ENCODE measurements at regions of chr3 and their contacts with region 1.

Region 1: GRCh38 chr3:129087138-129087702 is 26.6 kb downstream of the GP9 start:
- DNase-seq: peak in 1 of 2 donors; percentile 86
- H3K4me3 ChIP-seq: no peak overlapping the region
- H3K27ac ChIP-seq: peak overlapping the region; percentile 92 to 93
- H3K4me1 ChIP-seq: peaks cover 5 to 9% of the 10 kb centered on the region in 2 donors
- H3K27me3 ChIP-seq: no peaks in the 10 kb centered on the region
- CTCF ChIP-seq: no peak

Region 2: DNA sequence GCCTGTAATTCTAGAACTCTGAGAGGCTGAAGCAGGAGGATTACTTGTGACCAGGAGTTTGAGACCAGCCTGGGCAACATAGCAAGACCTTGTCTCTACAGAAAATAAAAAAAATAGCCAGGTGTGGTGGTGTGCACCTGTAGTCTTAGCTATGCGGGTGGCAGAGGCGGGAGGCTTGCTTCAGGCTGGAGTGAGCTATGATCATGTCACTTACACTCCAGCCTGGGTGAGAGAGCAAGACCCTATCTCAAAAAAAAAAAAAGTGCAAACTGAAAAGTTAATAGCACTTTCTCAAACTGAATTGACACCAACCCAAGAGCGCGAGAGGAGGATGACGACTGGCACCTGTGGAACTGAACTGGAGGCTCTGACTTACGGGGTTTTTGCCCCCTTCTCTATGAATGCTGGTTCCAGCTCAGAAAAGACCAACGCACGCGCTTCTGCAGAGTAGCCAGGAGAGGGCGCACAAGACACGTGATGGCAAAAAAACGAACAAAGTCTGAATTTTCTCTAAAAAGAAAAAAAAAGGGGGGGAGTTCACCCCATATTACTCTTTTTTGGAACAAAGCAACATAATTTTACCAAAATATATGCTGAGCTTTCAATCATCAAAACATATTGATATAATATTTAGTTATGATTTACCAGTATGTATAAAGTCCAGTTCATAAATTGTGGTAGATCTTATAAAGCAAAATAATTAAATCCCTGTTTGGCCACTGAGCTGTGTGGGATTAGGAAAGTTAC is 117.1 kb before region 1 on chr3:
- intact Hi-C with region 1: loop called (anchors 5 kb)
- DNase-seq: no peak
- H3K4me3 ChIP-seq: no peak overlapping the region
- H3K27ac ChIP-seq: no peak overlapping the region
- H3K4me1 ChIP-seq: peaks cover 0 to 3% of the 10 kb centered on the region in 2 donors
- H3K27me3 ChIP-seq: no peaks in the 10 kb centered on the region
- CTCF ChIP-seq: peak; percentile 90 to 97 (median 95)

Region 3: DNA sequence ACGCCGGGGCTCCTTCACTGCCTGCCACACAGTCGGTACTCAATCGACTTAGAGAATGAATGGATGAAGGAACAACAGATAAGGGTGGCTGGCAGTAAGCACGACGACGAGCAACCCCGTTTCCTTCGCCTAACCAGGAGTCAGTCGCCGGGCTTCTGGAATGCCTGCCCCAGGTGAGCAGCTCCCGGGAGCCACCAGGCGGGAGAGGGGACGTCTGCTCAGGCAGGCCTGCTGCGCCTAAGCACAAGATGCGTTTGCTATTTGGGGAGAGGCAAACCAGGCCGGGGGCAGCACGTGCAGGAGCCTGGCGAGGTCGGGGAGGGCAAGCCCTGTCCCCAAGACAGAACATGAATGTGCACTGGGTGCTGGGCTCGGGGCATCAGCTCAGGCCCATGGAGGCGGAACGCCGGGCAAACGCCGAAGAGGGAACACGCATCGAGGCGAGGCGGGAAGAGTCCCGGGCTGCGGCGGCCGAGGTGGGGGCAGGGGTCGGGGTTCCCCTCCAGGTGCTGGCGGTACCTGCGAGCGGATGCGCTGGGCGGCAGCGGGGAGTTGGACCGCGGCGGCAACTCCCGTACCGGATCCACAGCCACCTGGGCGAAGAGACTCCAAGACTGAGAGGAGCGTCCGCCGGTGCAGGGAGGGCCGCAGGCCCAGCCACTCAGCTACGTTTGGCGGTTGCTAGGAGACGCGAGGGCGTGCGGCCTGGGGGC is 93.6 kb before region 1 on chr3 and contains the start of gene CFAP92:
- intact Hi-C with region 1: no loop called
- DNase-seq: peak; percentile 45 to 90
- H3K4me3 ChIP-seq: peak within 1 kb of the TSS; percentile 41 to 65
- H3K27ac ChIP-seq: no peak within 1 kb of the TSS
- H3K4me1 ChIP-seq: peaks cover 3 to 8% of the 10 kb centered on the region in 2 donors
- H3K27me3 ChIP-seq: no peaks in the 10 kb centered on the region
- CTCF ChIP-seq: no peak
- total RNA-seq, gene CFAP92: not detected

Region 4: DNA sequence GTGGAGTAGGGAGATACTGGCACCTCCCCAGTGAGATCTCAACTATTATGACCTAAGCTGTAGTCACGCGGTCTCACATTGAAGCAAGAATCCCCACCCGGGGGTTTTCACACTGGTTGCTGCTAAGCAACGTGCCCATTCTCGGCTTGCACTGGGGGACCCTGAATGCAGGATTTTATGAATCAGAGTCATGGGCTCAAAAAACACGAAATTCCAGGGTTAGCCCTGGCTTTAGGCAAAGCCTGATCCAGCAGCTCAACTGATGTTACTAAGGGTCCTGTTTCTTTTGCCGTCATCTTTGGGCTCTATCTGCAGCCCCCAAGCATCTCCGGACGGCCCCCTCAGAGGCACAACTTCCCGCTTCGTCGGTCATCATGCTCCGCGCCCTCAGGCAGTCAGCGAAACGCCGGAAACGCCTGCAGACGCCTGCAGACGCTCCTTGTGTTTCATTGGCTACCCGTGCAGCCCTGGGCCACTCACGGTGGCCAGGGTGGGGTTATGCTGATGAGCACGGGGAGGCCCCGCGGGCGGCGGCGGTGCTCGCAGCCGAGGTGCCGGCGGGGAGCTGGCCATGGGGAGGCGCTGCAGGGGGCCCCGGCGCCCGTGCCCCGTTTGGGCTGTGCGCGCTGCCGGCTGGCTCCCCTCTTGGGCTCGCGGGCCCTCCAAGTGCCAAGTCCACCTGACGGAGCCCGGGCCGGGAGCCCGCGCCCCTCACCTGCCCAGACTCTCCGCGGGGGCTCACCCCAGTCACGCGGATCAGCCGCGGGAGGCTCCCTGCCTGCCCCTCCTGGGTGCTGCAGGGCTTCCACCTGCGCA is 60.3 kb before region 1 on chr3:
- intact Hi-C with region 1: loop called (anchors 2 kb)
- DNase-seq: peak; percentile 88 to 95
- H3K4me3 ChIP-seq: peak overlapping the region; percentile 45 to 77
- H3K27ac ChIP-seq: no peak overlapping the region
- H3K4me1 ChIP-seq: peaks cover 2 to 4% of the 10 kb centered on the region in 2 donors
- H3K27me3 ChIP-seq: no peaks in the 10 kb centered on the region
- CTCF ChIP-seq: peak; percentile 31 to 79 (median 60)

Region 5: GRCh38 chr3:129132097-129132866 is 45.1 kb after region 1 on chr3:
- intact Hi-C with region 1: no loop called
- DNase-seq: no peak
- H3K4me3 ChIP-seq: no peak overlapping the region
- H3K27ac ChIP-seq: no peak overlapping the region
- H3K4me1 ChIP-seq: no peaks in the 10 kb centered on the region
- H3K27me3 ChIP-seq: no peaks in the 10 kb centered on the region
- CTCF ChIP-seq: no peak

Measured in ascending aorta (tissue), 2 donors.